Activated CD8-positive, alpha-beta T cell treated with anti-CD3 and anti-CD28 coated beads for 36 hours (primary cell): ENCODE measurements at regions of chr3 and their contacts with region 1.

Region 1: GRCh38 chr3:30606301-30607031 is at the start of gene TGFBR2:
- DNase-seq: peak; percentile 96
- ATAC-seq: peak; percentile 75
- H3K4me3 Mint-ChIP-seq: peak within 1 kb of the TSS; percentile 88
- H3K27ac Mint-ChIP-seq: peak within 1 kb of the TSS; percentile 98
- H3K4me1 Mint-ChIP-seq: peaks cover 46% of the 10 kb centered on the region
- H3K27me3 Mint-ChIP-seq: no peaks in the 10 kb centered on the region
- CTCF ChIP-seq: no peak
- total RNA-seq, gene TGFBR2: 49.1 to 50.0 TPM

Region 2: GRCh38 chr3:30453360-30454039 is 153.0 kb before region 1 on chr3:
- CTCF ChIA-PET with region 1: no interaction called
- POLR2A ChIA-PET with region 1: no interaction called
- intact Hi-C with region 1: no loop called
- DNase-seq: no peak
- ATAC-seq: no peak
- H3K4me3 Mint-ChIP-seq: no peak overlapping the region
- H3K27ac Mint-ChIP-seq: no peak overlapping the region
- H3K4me1 Mint-ChIP-seq: peaks cover 22% of the 10 kb centered on the region
- H3K27me3 Mint-ChIP-seq: no peaks in the 10 kb centered on the region
- CTCF ChIP-seq: no peak

Region 3: DNA sequence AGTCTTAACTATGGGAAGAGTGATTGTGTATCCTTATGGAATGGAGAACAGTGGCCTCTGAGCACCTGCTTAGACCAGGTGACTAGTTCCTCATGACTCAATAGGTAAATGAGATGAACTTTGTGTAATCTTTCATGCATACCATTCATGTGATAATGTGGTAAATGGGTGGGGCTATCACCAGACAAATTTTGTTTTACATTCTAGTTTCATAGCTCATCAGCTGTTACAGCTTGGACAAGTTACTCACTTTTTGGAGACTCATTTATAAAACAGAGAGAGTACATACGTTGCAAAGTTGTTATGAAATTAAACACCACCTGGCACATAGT is 103.8 kb before region 1 on chr3:
- CTCF ChIA-PET with region 1: no interaction called
- POLR2A ChIA-PET with region 1: no interaction called
- intact Hi-C with region 1: loop called (anchors 10 kb)
- DNase-seq: no peak
- ATAC-seq: peak; percentile 55
- H3K4me3 Mint-ChIP-seq: no peak overlapping the region
- H3K27ac Mint-ChIP-seq: no peak overlapping the region
- H3K4me1 Mint-ChIP-seq: peaks cover 34% of the 10 kb centered on the region
- H3K27me3 Mint-ChIP-seq: no peaks in the 10 kb centered on the region
- CTCF ChIP-seq: no peak

Region 4: DNA sequence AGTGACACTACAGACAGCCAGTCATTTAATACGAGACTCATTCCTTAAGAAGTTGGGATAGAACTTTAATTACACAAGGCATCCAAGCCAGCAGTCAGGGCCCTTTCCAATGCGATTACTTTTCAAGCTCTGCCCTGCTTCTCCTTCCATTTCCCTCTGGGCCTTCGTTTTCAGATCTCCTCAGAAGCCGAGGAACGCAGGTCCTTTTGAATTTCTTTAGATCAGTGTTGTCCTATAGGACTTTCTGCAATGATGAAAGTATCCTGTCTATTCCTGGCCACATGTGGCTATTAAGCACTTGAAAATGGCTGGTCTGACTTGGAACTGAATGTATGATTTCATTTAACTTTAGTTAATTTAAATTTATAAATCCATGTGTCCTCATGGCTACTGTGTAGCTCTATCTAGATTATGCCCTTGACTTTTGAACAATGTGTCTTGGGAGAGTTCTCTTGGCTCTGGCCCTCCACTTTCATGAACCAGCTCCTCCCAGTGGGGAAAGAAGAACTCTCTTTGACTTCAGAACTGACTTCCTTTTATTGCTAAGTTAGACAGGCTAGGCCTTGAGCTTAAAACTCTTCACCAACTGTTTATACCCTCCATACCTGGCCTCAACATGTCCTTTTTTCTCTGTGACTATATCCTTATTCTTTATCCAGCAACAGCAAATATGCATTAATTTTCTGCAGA is 22.6 kb after region 1 on chr3:
- CTCF ChIA-PET with region 1: interaction called, 6 read pairs
- POLR2A ChIA-PET with region 1: interaction called, 48 read pairs
- intact Hi-C with region 1: no loop called
- DNase-seq: no peak
- ATAC-seq: peak; percentile 12
- H3K4me3 Mint-ChIP-seq: peak overlapping the region; percentile 34
- H3K27ac Mint-ChIP-seq: peak overlapping the region; percentile 98
- H3K4me1 Mint-ChIP-seq: peaks cover 89% of the 10 kb centered on the region
- H3K27me3 Mint-ChIP-seq: no peaks in the 10 kb centered on the region
- CTCF ChIP-seq: no peak

Region 5: DNA sequence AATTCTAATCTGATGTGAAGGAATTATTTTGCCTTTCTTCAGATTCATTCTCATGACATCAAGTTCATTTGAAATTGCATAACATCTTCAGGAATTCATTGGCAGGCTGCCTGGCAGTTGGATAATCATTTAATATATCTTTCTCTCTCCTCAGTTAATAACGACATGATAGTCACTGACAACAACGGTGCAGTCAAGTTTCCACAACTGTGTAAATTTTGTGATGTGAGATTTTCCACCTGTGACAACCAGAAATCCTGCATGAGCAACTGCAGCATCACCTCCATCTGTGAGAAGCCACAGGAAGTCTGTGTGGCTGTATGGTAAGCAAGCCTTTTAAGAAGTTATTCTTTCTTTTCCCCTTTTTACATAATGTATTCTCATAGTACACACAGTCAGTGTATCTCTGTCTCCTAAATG is 38.1 kb after region 1 on chr3:
- CTCF ChIA-PET with region 1: interaction called, 3 read pairs
- POLR2A ChIA-PET with region 1: interaction called, 27 read pairs
- intact Hi-C with region 1: loop called (anchors 5 kb)
- DNase-seq: peak; percentile 81
- ATAC-seq: peak; percentile 45
- H3K4me3 Mint-ChIP-seq: peak overlapping the region; percentile 51
- H3K27ac Mint-ChIP-seq: peak overlapping the region; percentile 98
- H3K4me1 Mint-ChIP-seq: peaks cover 95% of the 10 kb centered on the region
- H3K27me3 Mint-ChIP-seq: no peaks in the 10 kb centered on the region
- CTCF ChIP-seq: no peak